AG04450 (cell line): ENCODE measurements at regions of chr20 and their contacts with region 1.

Region 1: DNA sequence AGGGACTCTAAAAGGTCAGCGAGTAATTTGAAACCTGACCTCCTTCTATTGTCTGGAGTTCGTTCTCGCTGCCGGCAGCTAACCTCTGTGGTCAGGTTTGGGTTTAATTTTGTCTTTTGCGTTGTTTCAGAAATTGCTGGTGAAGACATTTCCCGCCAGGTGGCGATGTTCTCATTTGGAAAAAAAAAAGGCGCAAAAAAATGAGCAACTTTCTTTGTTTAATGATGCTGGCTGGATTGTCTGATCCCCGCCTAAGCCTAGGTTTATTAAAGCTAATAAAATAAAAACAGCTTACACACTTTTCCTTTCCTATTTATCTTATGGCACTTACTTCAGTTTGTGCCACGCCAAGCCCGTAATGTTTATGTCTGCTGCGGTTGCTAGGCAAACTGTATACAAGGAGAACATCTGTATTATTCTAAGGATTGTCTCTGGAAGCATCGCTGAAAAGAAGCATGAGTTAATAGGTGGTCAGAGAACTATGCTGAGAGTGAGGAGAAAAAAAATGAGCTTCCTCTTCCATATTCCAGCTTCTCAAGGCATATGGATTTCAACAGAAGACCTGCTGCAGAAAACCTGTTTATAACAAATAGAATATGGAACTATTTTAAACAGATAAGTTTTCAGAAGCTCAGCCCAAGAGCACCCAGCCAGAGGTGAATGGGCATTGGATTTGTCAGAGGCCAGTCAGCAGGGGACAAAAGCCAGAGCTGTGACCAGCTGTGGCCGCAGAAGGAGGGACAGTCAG is 205.7 kb downstream of the DOK5 start:
- DNase-seq: no peak
- H3K4me3 ChIP-seq: no peak overlapping the region
- H3K27ac ChIP-seq: no peak overlapping the region
- H3K27me3 ChIP-seq: no peaks in the 10 kb centered on the region
- CTCF ChIP-seq: peak; percentile 64

Region 2: GRCh38 chr20:54668271-54669039 is 12.6 kb before region 1 on chr20:
- CTCF ChIA-PET with region 1: interaction called, 32 read pairs
- POLR2A ChIA-PET with region 1: no interaction called
- DNase-seq: no peak
- H3K4me3 ChIP-seq: no peak overlapping the region
- H3K27ac ChIP-seq: no peak overlapping the region
- H3K27me3 ChIP-seq: no peaks in the 10 kb centered on the region
- CTCF ChIP-seq: peak; percentile 71

Region 3: DNA sequence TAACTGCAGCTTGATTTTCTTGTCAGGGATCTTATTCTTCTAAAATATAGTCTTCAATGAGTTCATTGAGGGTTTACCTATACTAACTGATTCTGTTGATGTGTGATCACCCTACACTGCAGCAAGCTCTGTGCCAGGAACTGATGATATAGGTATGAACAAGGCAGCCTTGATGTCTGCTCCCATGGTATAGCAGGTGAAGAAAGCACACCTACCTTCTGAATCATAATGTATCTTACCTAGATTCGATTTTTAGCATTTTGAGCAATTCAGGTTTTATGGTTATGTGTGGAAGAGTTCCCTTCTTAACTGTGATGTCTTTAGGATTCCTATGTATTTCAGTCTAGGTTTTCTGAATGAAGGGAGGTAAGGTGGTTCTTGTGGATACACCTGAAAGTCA is 17.3 kb after region 1 on chr20:
- CTCF ChIA-PET with region 1: interaction called, 13 read pairs
- POLR2A ChIA-PET with region 1: no interaction called
- DNase-seq: no peak
- H3K4me3 ChIP-seq: no peak overlapping the region
- H3K27ac ChIP-seq: no peak overlapping the region
- H3K27me3 ChIP-seq: no peaks in the 10 kb centered on the region
- CTCF ChIP-seq: no peak

Region 4: DNA sequence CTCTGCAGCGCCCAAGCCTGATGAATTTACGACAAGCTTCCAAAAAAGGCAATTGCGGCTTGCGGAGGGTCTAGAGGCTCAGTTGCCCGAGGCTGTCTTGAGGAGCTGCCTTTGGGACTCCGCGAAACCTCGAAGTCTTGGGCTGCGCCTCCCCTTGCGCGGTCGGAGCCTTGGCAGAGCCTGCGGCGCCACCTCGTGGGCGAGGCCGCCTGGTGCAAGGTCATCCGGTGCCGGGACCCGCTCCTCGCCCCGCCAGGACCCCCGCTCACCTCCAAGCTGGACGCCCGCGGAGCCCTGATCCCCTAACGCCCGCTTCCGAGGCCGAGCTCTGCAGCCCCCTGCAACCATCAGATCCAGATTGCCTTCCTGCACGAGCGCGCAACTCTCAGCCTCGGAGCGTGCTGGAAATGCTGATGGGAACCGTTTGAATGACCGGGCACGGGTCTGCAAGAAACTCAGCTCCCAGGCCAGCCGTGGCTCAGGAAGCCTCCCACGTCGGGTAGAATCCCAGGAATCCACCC is 1662.9 kb after region 1 on chr20:
- CTCF ChIA-PET with region 1: interaction called, 44 read pairs
- POLR2A ChIA-PET with region 1: no interaction called
- DNase-seq: no peak
- H3K4me3 ChIP-seq: no peak overlapping the region
- H3K27ac ChIP-seq: no peak overlapping the region
- H3K27me3 ChIP-seq: peaks cover 15% of the 10 kb centered on the region
- CTCF ChIP-seq: peak; percentile 66